Natural killer cell (primary cell): ENCODE measurements at regions of chr5 and their contacts with region 1.

Region 1: DNA sequence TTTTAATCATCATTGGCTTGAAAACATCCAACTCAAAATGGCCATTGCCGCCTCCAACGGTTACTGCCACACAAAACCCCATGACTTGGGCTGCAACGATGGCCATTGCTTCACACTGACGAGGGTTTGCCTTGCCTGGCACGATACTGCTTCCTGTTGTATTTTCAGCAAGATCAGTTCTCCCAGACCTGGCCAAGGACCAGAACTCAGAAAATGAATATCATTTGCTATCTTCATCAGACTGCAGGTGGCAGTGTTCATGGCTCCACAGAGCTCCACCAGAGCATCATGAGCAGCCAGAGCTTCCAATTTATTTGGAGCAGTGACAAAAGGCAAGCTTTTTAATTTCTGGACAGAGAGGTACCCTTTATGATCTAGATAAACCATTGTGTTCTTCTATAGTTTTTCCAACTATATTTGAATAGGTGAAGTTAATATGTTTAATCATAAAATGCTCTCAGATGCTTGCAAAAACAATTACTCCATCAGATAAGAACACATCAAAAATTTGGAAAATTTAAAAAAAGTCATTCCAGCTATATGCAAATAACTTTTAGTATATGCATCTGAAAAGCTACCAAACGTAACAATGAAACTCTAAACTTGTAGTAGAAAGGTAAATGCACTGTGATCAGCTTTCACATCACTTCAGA is 10.4 kb downstream of the AMACR start:
- DNase-seq: peak in 1 of 2 donors; percentile 67
- ATAC-seq: peak; percentile 59 to 74 (median 59)
- H3K4me3 ChIP-seq: no peak overlapping the region
- H3K4me3 Mint-ChIP-seq: no peak overlapping the region
- H3K27ac ChIP-seq: no peak overlapping the region
- H3K27ac Mint-ChIP-seq: peak overlapping the region; percentile 54 to 71
- H3K4me1 ChIP-seq: no peaks in the 10 kb centered on the region
- H3K4me1 Mint-ChIP-seq: peaks cover 5% of the 10 kb centered on the region in 2 donors
- H3K27me3 ChIP-seq: no peaks in the 10 kb centered on the region
- H3K27me3 Mint-ChIP-seq: no peaks in the 10 kb centered on the region
- CTCF ChIP-seq: peak; percentile 74

Region 2: DNA sequence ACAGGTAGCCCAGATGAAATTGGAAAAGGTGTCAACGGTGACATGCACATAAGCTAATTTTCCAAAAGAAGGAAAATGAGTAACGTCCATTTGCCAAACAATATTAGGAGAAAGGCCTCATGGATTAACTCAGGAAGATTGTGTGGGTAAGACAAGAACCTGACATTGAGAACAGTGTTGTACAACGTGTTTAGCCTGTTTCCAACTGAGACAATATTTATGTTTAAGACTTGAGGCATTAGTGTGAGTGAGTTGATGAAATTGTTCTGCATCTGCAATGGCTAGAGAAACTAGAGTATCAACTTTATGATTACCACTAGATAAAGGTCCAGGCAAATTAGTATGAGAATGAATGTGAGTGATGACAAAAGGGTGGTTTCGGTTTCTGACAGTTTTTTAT is 467.4 kb after region 1 on chr5:
- intact Hi-C with region 1: loop called (anchors 2 kb)
- DNase-seq: no peak
- ATAC-seq: no peak
- H3K4me3 ChIP-seq: no peak overlapping the region
- H3K4me3 Mint-ChIP-seq: no peak overlapping the region
- H3K27ac ChIP-seq: no peak overlapping the region
- H3K27ac Mint-ChIP-seq: no peak overlapping the region
- H3K4me1 ChIP-seq: no peaks in the 10 kb centered on the region
- H3K4me1 Mint-ChIP-seq: peaks cover 0 to 4% of the 10 kb centered on the region in 2 donors
- H3K27me3 ChIP-seq: no peaks in the 10 kb centered on the region
- H3K27me3 Mint-ChIP-seq: peaks cover 34 to 38% of the 10 kb centered on the region in 2 donors
- CTCF ChIP-seq: no peak